A549 (cell line): ENCODE measurements at regions of chr1 and their contacts with region 1.

Region 1: DNA sequence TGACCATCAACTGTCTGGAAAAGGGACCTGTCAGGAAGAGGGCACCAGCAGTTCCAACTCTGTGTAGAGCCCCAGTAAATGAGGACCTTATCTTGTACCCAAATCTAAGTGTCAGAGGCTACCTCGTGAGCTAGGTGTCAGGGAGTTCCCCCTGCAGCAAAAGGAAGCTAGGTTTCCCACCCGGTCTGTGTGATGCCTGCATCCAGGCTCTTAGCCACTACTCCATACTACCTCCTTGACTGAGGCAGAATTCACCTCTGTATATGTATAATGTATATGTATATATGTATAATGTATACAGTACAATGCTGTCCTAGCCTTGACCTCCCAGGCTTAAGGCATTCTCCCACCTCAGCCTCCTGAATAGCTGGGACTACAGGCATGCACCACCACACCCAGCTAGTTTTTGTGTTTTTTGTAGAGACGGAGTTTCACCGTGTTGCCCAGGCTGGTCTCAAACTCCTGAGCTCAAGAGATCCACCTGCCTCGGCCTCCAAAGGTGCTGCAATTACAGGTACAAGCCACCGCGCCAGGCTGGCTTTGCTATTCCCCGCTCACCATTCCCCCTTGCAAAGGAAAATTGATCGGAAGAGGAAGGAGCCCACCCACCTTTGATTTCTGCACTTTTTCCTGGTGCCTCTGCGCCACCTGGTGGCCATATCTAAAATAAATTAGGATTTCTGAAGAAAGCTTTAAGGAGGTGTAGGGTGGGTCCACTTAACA is 15.7 kb upstream of the LUZP1 start:
- DNase-seq: no peak
- ATAC-seq: no peak
- H3K4me3 ChIP-seq: no peak overlapping the region
- H3K27ac ChIP-seq: peak overlapping the region; percentile 96 to 98; a peak in 5 of 6 replicates
- H3K4me1 ChIP-seq: peaks cover 24% of the 10 kb centered on the region
- CTCF ChIP-seq: peak; percentile 81
- EP300 ChIP-seq: no peak
- POLR2A ChIP-seq: no peak
- RAD21 ChIP-seq: peak; percentile 84 to 89

Region 2: DNA sequence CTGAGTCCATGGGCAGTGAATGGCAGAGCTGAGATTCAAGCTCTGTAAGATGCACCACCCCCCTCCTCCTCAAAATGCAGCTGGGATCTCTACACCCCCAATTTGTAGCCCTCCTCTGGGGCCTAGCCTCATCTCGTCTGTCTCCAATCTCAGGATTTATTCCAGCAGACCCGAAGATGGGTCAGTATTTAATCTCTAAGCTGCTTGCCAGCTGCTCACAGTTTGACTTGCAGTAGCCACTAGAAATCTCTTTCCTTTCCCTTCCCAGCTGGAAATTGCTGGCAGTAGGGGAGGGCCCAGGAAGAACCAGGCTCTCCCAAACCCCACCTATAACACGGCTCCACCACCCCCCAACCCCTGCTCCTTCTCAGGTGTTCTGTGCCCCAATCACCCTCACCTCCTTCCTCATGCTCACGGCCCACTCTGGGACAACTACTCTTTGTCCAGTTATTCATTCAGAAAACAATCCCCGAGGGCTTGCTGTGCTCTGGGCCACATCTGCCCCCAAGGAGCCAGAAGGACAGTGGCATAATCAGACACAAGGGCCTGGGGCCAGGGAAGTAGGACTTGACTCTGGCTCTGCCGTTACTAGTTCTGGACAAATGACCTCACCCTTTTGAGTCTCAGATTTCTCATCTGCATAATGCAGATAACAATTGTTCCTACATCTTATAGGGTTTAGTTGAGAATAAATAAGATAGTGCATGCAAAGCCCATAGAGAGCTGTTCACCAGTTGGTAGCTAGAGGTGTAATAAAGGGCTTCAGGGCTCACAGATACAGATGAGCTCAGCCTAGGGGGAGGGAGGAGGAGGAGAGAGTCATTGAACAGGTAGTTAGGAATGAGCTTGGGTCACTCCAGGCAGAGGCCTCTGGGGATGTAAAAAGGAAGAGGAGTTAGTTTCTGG is 213.0 kb before region 1 on chr1:
- CTCF ChIA-PET with region 1: interaction called, 26 read pairs
- POLR2A ChIA-PET with region 1: no interaction called
- DNase-seq: no peak
- ATAC-seq: no peak
- H3K4me3 ChIP-seq: no peak overlapping the region
- H3K27ac ChIP-seq: no peak overlapping the region
- H3K4me1 ChIP-seq: peaks cover 8% of the 10 kb centered on the region; the same call in 2 of the 3 replicates
- CTCF ChIP-seq: no peak
- EP300 ChIP-seq: no peak
- POLR2A ChIP-seq: no peak
- RAD21 ChIP-seq: no peak

Region 3: DNA sequence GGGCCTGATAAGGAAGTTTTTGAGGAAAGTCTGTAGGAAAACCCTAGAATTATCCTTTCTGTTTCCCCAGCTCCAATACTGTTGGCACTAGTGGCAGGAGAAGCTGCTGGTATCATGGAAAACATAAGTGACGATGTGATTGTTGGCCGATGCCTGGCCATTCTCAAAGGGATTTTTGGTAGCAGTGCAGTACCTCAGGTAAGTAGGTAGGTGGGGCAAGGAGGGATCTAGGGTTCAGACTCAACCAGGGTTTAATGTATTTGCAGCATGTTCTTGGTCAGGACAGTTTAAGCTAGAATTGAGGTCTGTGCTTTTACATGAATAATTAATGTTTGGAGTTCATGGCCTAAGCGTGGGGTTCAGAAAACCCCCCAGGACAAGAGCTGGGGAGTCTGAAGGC is 103.0 kb before region 1 on chr1:
- CTCF ChIA-PET with region 1: interaction called, 19 read pairs
- POLR2A ChIA-PET with region 1: no interaction called
- DNase-seq: peak; percentile 22
- ATAC-seq: peak; percentile 48 to 62; a peak in 3 of 6 replicates
- H3K4me3 ChIP-seq: no peak overlapping the region
- H3K27ac ChIP-seq: no peak overlapping the region
- H3K4me1 ChIP-seq: peaks cover 3% of the 10 kb centered on the region; the same call in 1 of the 3 replicates
- CTCF ChIP-seq: no peak
- EP300 ChIP-seq: no peak
- POLR2A ChIP-seq: no peak
- RAD21 ChIP-seq: no peak

Region 4: GRCh38 chr1:23163395-23163794 is 21.0 kb before region 1 on chr1:
- CTCF ChIA-PET with region 1: interaction called, 86 read pairs
- POLR2A ChIA-PET with region 1: interaction called, 4 read pairs
- DNase-seq: no peak
- ATAC-seq: no peak
- H3K4me3 ChIP-seq: no peak overlapping the region
- H3K27ac ChIP-seq: peak overlapping the region in 1 of 2 experiments; percentile 34; a peak in 2 of 6 replicates
- H3K4me1 ChIP-seq: peaks cover 59% of the 10 kb centered on the region
- CTCF ChIP-seq: no peak
- EP300 ChIP-seq: no peak
- POLR2A ChIP-seq: no peak
- RAD21 ChIP-seq: no peak

Region 5: DNA sequence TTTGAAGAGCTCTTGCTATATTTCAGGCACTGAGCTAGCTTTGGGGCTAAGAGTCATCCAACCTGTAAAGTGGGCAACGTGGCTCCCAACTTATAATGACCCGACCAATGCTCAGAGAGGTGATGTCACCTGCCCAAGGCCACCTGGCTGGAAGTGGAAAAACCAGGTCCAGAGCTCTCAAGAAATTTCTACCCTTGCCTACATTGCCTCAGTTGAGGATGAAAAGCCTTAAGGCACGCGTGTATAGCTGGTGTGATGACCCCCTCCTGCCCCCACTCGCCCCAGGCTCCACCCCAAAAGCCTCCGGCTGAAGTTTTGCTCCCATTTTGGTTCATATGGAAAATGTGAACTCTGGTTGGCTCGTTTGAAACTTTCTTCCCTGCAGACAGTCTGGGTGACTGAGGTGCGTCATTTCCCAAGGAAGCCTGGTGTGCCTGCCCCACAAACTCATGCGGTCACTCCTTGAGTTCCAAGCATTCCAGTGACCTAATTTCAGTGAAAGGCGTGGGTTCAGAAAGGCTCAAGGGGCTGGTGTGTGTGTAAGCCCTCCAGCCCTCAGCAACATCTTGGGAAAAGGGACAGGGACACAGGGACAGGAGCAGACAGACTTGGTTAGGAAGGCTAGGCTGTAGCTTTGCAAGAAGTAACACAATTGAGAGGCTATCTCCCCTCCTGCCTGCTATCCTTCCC is 12.4 kb after region 1 on chr1:
- CTCF ChIA-PET with region 1: interaction called, 46 read pairs
- POLR2A ChIA-PET with region 1: interaction called, 3 read pairs
- DNase-seq: peak; percentile 80 to 96
- ATAC-seq: peak; percentile 77 to 84
- H3K4me3 ChIP-seq: no peak overlapping the region
- H3K27ac ChIP-seq: peak overlapping the region; percentile 97 to 98
- H3K4me1 ChIP-seq: peaks cover 65% of the 10 kb centered on the region
- CTCF ChIP-seq: no peak
- EP300 ChIP-seq: peak; percentile 66 to 83; a peak in 3 of 5 replicates
- POLR2A ChIP-seq: no peak
- RAD21 ChIP-seq: 0 out of 5 replicates have a peak, but pooled peaks of 1 of the 2 experiments have one; percentile 10

Region 6: DNA sequence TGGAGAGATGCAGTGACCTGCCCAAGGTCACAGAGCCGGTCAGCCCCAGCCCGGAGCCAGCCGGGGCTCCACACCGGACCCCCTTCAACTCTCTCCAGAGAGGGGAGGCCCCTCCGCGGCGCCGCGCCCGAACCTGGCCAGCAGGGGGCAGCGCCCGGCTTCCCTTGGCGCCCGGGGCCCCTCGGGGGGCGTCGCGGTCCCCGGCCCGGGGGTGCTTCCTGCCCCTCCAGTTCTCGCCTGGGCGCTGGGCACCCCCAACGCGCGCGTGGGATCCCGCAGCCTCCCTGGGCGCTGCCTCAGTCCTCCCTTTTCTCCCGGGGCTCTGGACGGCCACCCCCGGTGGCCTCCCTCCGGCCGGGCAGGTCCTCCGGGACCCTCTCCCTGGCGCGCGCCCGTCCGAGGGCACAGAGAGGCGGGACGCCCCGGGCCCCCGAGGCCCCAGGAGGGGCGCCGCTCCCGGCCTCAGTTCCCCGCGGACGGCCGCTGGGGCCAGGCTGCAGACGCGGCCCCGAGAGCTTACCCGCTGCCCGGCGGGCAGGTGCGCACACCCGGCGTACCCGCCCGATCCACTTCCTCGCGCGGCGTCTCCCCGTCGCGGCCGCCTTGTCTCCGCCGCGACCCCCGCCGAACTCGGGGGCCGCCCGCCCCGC is 32.5 kb after region 1 on chr1:
- CTCF ChIA-PET with region 1: interaction called, 24 read pairs
- POLR2A ChIA-PET with region 1: interaction called, 3 read pairs
- DNase-seq: no peak
- ATAC-seq: peak; percentile 77 to 85
- H3K4me3 ChIP-seq: peak overlapping the region; percentile 91
- H3K27ac ChIP-seq: peak overlapping the region; percentile 96 to 97
- H3K4me1 ChIP-seq: peaks cover 36% of the 10 kb centered on the region
- CTCF ChIP-seq: peak; percentile 80
- EP300 ChIP-seq: no peak
- POLR2A ChIP-seq: no peak
- RAD21 ChIP-seq: peak; percentile 57 to 86; a peak in 4 of 5 replicates